CD8-positive, alpha-beta T cell (primary cell): ENCODE measurements at regions of chr14 and their contacts with region 1.

Region 1: GRCh38 chr14:50860478-50861086 is 11.3 kb upstream of the ABHD12B start:
- DNase-seq: peak; percentile 84 to 93 (median 90)
- ATAC-seq: peak; percentile 77
- H3K4me3 ChIP-seq: peak overlapping the region; percentile 72 to 98
- H3K4me3 Mint-ChIP-seq: peak overlapping the region; percentile 93
- H3K27ac ChIP-seq: peak overlapping the region in 1 of 2 experiments; percentile 65
- H3K27ac Mint-ChIP-seq: peak overlapping the region; percentile 87
- H3K4me1 ChIP-seq: peaks cover 11% of the 10 kb centered on the region
- H3K4me1 Mint-ChIP-seq: peaks cover 13% of the 10 kb centered on the region
- H3K27me3 ChIP-seq: no peaks in the 10 kb centered on the region
- H3K27me3 Mint-ChIP-seq: no peaks in the 10 kb centered on the region
- CTCF ChIP-seq: peak; percentile 83

Region 2: GRCh38 chr14:50599700-50600444 is 260.7 kb before region 1 on chr14:
- CTCF ChIA-PET with region 1: interaction called, 12 read pairs
- POLR2A ChIA-PET with region 1: interaction called, 3 read pairs
- intact Hi-C with region 1: loop called (anchors 1 to 2 kb)
- DNase-seq: peak in 2 of 9 experiments; percentile 30 to 51
- ATAC-seq: peak; percentile 23
- H3K4me3 ChIP-seq: no peak overlapping the region
- H3K4me3 Mint-ChIP-seq: no peak overlapping the region
- H3K27ac ChIP-seq: no peak overlapping the region
- H3K27ac Mint-ChIP-seq: no peak overlapping the region
- H3K4me1 ChIP-seq: no peaks in the 10 kb centered on the region
- H3K4me1 Mint-ChIP-seq: no peaks in the 10 kb centered on the region
- H3K27me3 ChIP-seq: no peaks in the 10 kb centered on the region
- H3K27me3 Mint-ChIP-seq: no peaks in the 10 kb centered on the region
- CTCF ChIP-seq: peak; percentile 34

Region 3: GRCh38 chr14:50756300-50756699 is 104.3 kb before region 1 on chr14:
- CTCF ChIA-PET with region 1: interaction called, 11 read pairs
- POLR2A ChIA-PET with region 1: interaction called, 5 read pairs
- intact Hi-C with region 1: no loop called
- DNase-seq: peak in 1 of 9 experiments; percentile 37
- ATAC-seq: no peak
- H3K4me3 ChIP-seq: no peak overlapping the region
- H3K4me3 Mint-ChIP-seq: no peak overlapping the region
- H3K27ac ChIP-seq: no peak overlapping the region
- H3K27ac Mint-ChIP-seq: no peak overlapping the region
- H3K4me1 ChIP-seq: no peaks in the 10 kb centered on the region
- H3K4me1 Mint-ChIP-seq: peaks cover 4% of the 10 kb centered on the region
- H3K27me3 ChIP-seq: no peaks in the 10 kb centered on the region
- H3K27me3 Mint-ChIP-seq: no peaks in the 10 kb centered on the region
- CTCF ChIP-seq: no peak

Region 4: DNA sequence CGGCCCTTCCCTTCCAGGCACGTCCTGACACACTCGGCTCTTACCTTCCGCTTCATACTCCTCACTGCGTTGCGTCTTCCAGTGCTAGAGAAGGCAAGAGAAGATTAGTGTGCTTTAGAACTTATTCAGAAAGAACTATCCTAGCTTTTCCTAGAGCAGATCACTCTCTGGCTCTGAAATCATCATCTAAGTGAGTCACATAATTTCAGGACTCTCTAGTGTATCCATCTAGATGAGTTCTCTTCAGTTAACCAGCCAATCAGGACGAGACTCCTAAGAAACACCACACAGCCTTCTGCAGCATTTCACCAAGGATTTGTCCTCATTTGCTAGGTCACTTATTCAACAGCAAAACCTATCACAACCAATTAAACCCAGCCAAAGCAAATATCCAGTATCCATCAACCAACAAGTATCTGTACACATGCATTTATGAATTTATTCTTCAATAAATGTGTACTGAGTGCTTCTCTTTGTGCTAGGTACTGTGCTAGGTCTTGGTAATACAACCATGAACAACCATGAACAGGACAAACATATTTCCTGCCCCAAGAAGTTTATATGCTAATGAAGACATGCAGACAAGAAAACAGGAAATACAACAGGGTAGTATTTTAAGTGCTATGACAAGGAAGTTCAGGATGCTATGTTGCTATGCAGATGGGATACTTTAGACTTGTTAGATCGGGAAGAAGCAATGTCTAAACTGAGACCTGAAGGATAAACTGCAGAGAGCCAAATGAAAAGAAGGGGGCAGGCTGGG is 81.7 kb before region 1 on chr14:
- CTCF ChIA-PET with region 1: interaction called, 186 read pairs
- POLR2A ChIA-PET with region 1: interaction called, 20 read pairs
- intact Hi-C with region 1: loop called (anchors 1 to 2 kb)
- DNase-seq: peak in 1 of 9 experiments; percentile 28
- ATAC-seq: peak; percentile 27
- H3K4me3 ChIP-seq: no peak overlapping the region
- H3K4me3 Mint-ChIP-seq: no peak overlapping the region
- H3K27ac ChIP-seq: peak overlapping the region in 1 of 2 experiments; percentile 17
- H3K27ac Mint-ChIP-seq: peak overlapping the region; percentile 80
- H3K4me1 ChIP-seq: peaks cover 57% of the 10 kb centered on the region
- H3K4me1 Mint-ChIP-seq: peaks cover 68% of the 10 kb centered on the region
- H3K27me3 ChIP-seq: no peaks in the 10 kb centered on the region
- H3K27me3 Mint-ChIP-seq: no peaks in the 10 kb centered on the region
- CTCF ChIP-seq: no peak

Region 5: DNA sequence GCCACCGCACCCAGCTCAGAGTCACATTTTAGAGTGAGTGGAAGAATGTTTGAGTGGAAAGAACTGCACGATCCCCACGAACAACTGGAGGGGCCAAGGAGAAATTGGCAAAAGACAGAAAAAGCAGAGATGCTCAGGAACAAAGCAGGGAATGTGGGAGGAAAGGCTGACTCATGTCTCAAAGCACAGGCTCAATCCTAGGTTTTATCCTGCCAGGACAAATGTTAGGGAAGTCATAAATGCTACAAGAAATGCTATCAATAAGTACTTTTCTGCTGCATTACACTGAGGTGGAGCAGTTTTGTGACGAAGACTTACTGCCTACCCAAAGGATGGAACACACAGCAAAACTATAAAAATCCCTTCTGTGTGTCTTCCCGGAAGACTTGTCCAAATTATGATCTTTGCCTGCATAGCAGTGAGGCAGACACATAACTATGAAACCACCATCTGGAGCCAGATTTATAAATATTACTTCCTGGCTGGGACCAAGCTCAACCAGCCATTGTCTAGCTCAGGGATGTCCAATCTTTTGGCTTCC is 56.3 kb before region 1 on chr14:
- CTCF ChIA-PET with region 1: interaction called, 19 read pairs
- POLR2A ChIA-PET with region 1: no interaction called
- intact Hi-C with region 1: no loop called
- DNase-seq: no peak
- ATAC-seq: no peak
- H3K4me3 ChIP-seq: no peak overlapping the region
- H3K4me3 Mint-ChIP-seq: no peak overlapping the region
- H3K27ac ChIP-seq: no peak overlapping the region
- H3K27ac Mint-ChIP-seq: peak overlapping the region; percentile 68
- H3K4me1 ChIP-seq: peaks cover 8% of the 10 kb centered on the region
- H3K4me1 Mint-ChIP-seq: peaks cover 72% of the 10 kb centered on the region
- H3K27me3 ChIP-seq: no peaks in the 10 kb centered on the region
- H3K27me3 Mint-ChIP-seq: no peaks in the 10 kb centered on the region
- CTCF ChIP-seq: no peak

Region 6: DNA sequence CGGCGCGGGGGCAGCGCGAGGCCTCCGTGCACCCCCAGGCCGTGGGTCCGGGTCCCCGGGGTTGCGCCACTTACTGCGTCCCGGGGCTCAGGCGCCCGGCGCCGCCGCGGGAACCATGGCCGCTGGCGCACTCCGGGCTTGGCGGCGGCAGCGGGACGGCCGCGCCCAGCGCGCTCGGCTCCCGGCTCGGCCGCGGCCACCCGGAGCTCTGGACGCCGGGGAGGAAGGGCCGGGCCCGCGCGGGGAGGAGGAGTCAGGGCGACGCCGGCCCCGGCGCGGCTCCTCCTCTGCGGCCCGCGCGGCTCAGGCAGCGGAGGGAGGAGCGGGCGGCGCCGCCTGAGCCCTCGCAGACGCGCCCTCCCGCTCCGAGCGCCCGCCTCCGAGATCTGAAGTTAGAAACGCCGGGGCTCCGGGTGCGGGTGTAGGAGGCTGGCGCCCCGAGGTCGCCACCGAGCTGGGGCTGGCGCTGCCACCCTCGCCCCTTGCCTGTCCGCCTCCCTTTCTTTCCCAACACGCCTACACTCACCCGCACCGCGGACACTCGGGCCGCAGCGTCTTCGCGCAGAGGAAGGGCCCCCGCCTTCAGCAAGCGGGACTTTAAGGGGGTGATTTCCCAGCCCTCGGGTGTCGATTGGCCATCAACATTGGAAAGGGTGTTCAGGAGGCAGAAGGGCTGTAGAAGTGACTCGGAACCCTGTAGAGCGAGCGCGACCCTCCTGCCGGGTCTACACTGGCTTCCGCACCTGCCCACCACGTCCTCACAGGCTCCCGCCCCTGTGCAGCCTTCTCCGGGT is 29.5 kb before region 1 on chr14 and contains the start of gene NIN:
- CTCF ChIA-PET with region 1: interaction called, 40 read pairs
- POLR2A ChIA-PET with region 1: interaction called, 37 read pairs
- intact Hi-C with region 1: loop called (anchors 1 to 2 kb)
- DNase-seq: peak; percentile 44 to 89 (median 75)
- ATAC-seq: peak; percentile 80
- H3K4me3 ChIP-seq: peak within 1 kb of the TSS; percentile 79 to 86
- H3K4me3 Mint-ChIP-seq: peak within 1 kb of the TSS; percentile 97
- H3K27ac ChIP-seq: peak within 1 kb of the TSS; percentile 76 to 87
- H3K27ac Mint-ChIP-seq: peak within 1 kb of the TSS; percentile 98
- H3K4me1 ChIP-seq: peaks cover 50% of the 10 kb centered on the region
- H3K4me1 Mint-ChIP-seq: peaks cover 68% of the 10 kb centered on the region
- H3K27me3 ChIP-seq: no peaks in the 10 kb centered on the region
- H3K27me3 Mint-ChIP-seq: no peaks in the 10 kb centered on the region
- CTCF ChIP-seq: no peak
- total RNA-seq, gene NIN: 121 to 132 TPM

Region 7: GRCh38 chr14:51929906-51930682 is 1069.5 kb after region 1 on chr14:
- CTCF ChIA-PET with region 1: no interaction called
- POLR2A ChIA-PET with region 1: no interaction called
- intact Hi-C with region 1: no loop called
- DNase-seq: peak in 1 of 9 experiments; percentile 56
- ATAC-seq: no peak
- H3K4me3 ChIP-seq: no peak overlapping the region
- H3K4me3 Mint-ChIP-seq: peak overlapping the region; percentile 16
- H3K27ac ChIP-seq: peak overlapping the region in 1 of 2 experiments; percentile 63
- H3K27ac Mint-ChIP-seq: peak overlapping the region; percentile 79
- H3K4me1 ChIP-seq: peaks cover 37% of the 10 kb centered on the region
- H3K4me1 Mint-ChIP-seq: peaks cover 74% of the 10 kb centered on the region
- H3K27me3 ChIP-seq: no peaks in the 10 kb centered on the region
- H3K27me3 Mint-ChIP-seq: no peaks in the 10 kb centered on the region
- CTCF ChIP-seq: no peak